CD8-positive, alpha-beta memory T cell (primary cell): ENCODE measurements at regions of chr6 and their contacts with region 1.

Region 1: GRCh38 chr6:2952557-2953095 is 18.7 kb downstream of the SERPINB6 start:
- DNase-seq: peak in 4 of 5 donors; percentile 13 to 63 (median 24)
- H3K4me3 ChIP-seq: no peak overlapping the region
- H3K4me3 Mint-ChIP-seq: no peak overlapping the region
- H3K27ac ChIP-seq: no peak overlapping the region
- H3K27ac Mint-ChIP-seq: peak overlapping the region in 2 of 8 donors; percentile 62 to 81
- H3K4me1 ChIP-seq: peaks cover 4% of the 10 kb centered on the region
- H3K4me1 Mint-ChIP-seq: no peaks in the 10 kb centered on the region
- H3K27me3 ChIP-seq: no peaks in the 10 kb centered on the region
- H3K27me3 Mint-ChIP-seq: no peaks in the 10 kb centered on the region

Region 2: GRCh38 chr6:2940010-2940850 is 12.4 kb before region 1 on chr6:
- CTCF ChIA-PET with region 1: interaction called, 40 read pairs
- POLR2A ChIA-PET with region 1: no interaction called
- DNase-seq: peak; percentile 46 to 86 (median 78)
- H3K4me3 ChIP-seq: peak overlapping the region; percentile 85
- H3K4me3 Mint-ChIP-seq: peak overlapping the region; percentile 71 to 92 (median 89)
- H3K27ac ChIP-seq: peak overlapping the region; percentile 60
- H3K27ac Mint-ChIP-seq: peak overlapping the region; percentile 90 to 99 (median 94)
- H3K4me1 ChIP-seq: peaks cover 73% of the 10 kb centered on the region
- H3K4me1 Mint-ChIP-seq: peaks cover 59 to 70% (median 61%) of the 10 kb centered on the region in 3 donors
- H3K27me3 ChIP-seq: no peaks in the 10 kb centered on the region
- H3K27me3 Mint-ChIP-seq: peaks cover 0 to 1% of the 10 kb centered on the region in 2 donors

Region 3: GRCh38 chr6:3068329-3069214 is 115.9 kb after region 1 on chr6 and contains the start of gene RIPK1:
- CTCF ChIA-PET with region 1: interaction called, 5 read pairs
- POLR2A ChIA-PET with region 1: interaction called, 10 read pairs
- DNase-seq: peak; percentile 93 to 96 (median 94)
- H3K4me3 ChIP-seq: peak within 1 kb of the TSS; percentile 97
- H3K4me3 Mint-ChIP-seq: peak within 1 kb of the TSS; percentile 95 to 99 (median 97)
- H3K27ac ChIP-seq: peak within 1 kb of the TSS; percentile 90
- H3K27ac Mint-ChIP-seq: peak within 1 kb of the TSS; percentile 97 to 99 (median 98)
- H3K4me1 ChIP-seq: peaks cover 29% of the 10 kb centered on the region
- H3K4me1 Mint-ChIP-seq: peaks cover 61 to 82% (median 79%) of the 10 kb centered on the region in 3 donors
- H3K27me3 ChIP-seq: no peaks in the 10 kb centered on the region
- H3K27me3 Mint-ChIP-seq: peaks cover 0 to 2% of the 10 kb centered on the region in 2 donors
- total RNA-seq, gene RIPK1: 21.7 to 22.1 TPM